PC-9 (cell line): ENCODE measurements at regions of chr22 and their contacts with region 1.

Region 1: DNA sequence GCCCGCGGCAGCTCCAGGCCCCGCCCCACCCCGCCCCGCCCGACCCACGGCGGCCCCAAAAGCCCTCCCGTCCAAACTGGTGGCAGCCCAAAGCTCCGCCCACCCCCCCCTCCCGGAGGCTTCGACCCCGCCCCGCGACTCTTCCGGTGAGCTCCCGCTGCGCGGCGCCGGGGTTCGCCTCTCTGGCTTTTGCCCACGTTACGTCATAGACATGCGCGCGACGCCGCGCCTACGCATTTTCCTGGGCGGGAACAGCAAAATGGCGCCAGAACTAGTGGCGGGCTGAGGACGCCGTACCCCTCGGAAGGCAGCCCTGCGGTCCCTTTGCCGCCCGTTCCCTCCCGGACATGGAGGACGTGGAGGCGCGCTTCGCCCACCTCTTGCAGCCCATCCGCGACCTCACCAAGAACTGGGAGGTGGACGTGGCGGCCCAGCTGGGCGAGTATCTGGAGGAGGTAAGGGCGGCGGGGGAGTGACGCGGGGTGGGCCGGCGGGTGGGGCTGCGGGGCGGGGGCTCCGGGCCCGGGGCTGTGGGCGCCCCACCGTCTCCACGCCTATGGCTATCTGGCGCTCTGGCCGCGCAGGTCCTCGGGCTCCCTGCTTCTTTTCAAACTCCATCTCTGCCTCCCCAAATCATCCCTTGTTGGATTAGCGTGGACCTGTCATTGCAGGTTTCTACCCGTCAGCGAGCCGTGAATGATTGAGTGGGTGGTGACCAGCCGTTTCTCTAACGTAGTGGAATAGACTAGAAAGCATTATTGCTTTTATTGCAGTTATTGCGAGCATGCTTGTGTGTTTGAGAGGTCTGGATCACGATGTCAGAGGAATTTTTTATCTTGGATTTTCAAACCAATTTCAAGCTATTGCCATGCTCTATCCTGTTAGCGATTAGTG is at the start of gene NCAPH2:
- DNase-seq: peak; percentile 93 to 94
- H3K4me3 ChIP-seq: peak within 1 kb of the TSS; percentile 97
- H3K27ac ChIP-seq: peak within 1 kb of the TSS; percentile 48
- H3K4me1 ChIP-seq: peaks cover 19% of the 10 kb centered on the region
- H3K27me3 ChIP-seq: no peaks in the 10 kb centered on the region
- CTCF ChIP-seq: no peak
- total RNA-seq, gene NCAPH2: 58.8 and 62.9 TPM in 2 replicates

Region 2: GRCh38 chr22:50326959-50327710 is 181.1 kb before region 1 on chr22 and contains the start of gene DENND6B:
- CTCF ChIA-PET with region 1: no interaction called
- POLR2A ChIA-PET with region 1: no interaction called
- intact Hi-C with region 1: no loop called
- DNase-seq: peak; percentile 62 to 80
- H3K4me3 ChIP-seq: peak within 1 kb of the TSS; percentile 92
- H3K27ac ChIP-seq: peak within 1 kb of the TSS; percentile 46
- H3K4me1 ChIP-seq: peaks cover 33% of the 10 kb centered on the region
- H3K27me3 ChIP-seq: no peaks in the 10 kb centered on the region
- CTCF ChIP-seq: peak; percentile 61
- total RNA-seq, gene DENND6B: 12.1 and 14.3 TPM in 2 replicates

Region 3: DNA sequence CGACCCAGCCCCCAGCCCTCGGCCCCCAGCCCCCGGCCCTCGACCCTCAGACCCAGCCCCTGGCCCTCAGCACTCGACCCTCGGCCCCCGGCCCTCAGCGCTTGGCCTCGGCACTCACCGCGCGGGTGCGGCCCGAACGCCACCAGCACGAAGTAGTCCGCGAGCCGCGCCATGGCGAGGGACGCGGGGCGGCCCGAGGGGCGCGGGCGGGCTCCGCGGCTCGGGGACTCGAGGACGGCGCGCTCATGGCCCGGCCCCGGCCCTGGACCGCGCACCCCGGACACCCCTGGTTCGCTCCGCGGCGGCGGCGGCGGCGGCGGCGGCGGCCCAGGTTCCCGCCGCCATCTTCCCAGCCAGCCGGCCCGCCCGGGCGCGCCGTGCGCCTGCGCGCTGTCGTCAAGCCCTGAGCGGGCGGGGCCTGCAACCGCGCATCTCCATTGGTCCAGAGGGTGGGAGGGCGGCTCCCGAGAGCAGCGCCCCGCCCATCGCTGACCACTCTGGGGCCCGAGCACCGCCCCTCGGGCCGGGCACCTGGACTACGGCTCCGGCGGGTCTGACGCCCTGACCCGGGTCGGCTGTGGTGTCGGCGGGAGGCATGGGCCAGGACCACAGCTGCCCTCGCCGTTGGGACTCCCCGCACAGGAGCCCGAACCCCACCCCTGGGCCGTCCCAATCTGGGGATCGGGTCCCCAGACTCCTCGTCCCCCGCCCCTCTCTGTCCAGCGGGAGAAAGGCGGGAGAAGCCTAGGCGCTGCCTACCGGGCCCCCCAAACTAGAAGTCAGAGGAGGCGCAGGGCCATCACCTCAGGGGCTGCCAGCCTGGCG is 33.4 kb before region 1 on chr22 and contains the start of gene SBF1:
- CTCF ChIA-PET with region 1: interaction called, 5 read pairs
- POLR2A ChIA-PET with region 1: no interaction called
- intact Hi-C with region 1: loop called (anchors 1 kb)
- DNase-seq: peak; percentile 82 to 92
- H3K4me3 ChIP-seq: peak within 1 kb of the TSS; percentile 77
- H3K27ac ChIP-seq: no peak within 1 kb of the TSS
- H3K4me1 ChIP-seq: peaks cover 45% of the 10 kb centered on the region
- H3K27me3 ChIP-seq: no peaks in the 10 kb centered on the region
- CTCF ChIP-seq: no peak
- total RNA-seq, gene SBF1: 85.2 and 104 TPM in 2 replicates

Region 4: GRCh38 chr22:50582562-50583293 is 74.5 kb after region 1 on chr22 and contains the start of gene CHKB:
- CTCF ChIA-PET with region 1: no interaction called
- POLR2A ChIA-PET with region 1: interaction called, 7 read pairs
- intact Hi-C with region 1: loop called (anchors 5 kb)
- DNase-seq: peak; percentile 99
- H3K4me3 ChIP-seq: peak within 1 kb of the TSS; percentile 89
- H3K27ac ChIP-seq: peak within 1 kb of the TSS; percentile 86
- H3K4me1 ChIP-seq: peaks cover 18% of the 10 kb centered on the region
- H3K27me3 ChIP-seq: no peaks in the 10 kb centered on the region
- CTCF ChIP-seq: no peak
- total RNA-seq, gene CHKB: 60.0 and 70.4 TPM in 2 replicates